ENCODE measurements at regions of chr20 and their contacts with region 1.

Region 1: GRCh38 chr20:59954718-59955117 is 3.5 kb upstream of the CDH26 start:
- DNase-seq: no peak
- H3K4me3 ChIP-seq: no peak overlapping the region
- H3K27ac ChIP-seq: no peak overlapping the region
- H3K4me1 ChIP-seq: peaks cover 3% of the 10 kb centered on the region
- H3K27me3 ChIP-seq: no peaks in the 10 kb centered on the region
- CTCF ChIP-seq: no peak

Region 2: GRCh38 chr20:59864726-59865125 is 90.0 kb before region 1 on chr20:
- intact Hi-C with region 1: no loop called
- DNase-seq: no peak
- H3K4me3 ChIP-seq: no peak overlapping the region
- H3K27ac ChIP-seq: no peak overlapping the region
- H3K4me1 ChIP-seq: no peaks in the 10 kb centered on the region
- H3K27me3 ChIP-seq: no peaks in the 10 kb centered on the region
- CTCF ChIP-seq: no peak

Region 3: GRCh38 chr20:60050158-60050947 is 95.6 kb after region 1 on chr20:
- intact Hi-C with region 1: loop called (anchors 5 kb)
- DNase-seq: no peak
- H3K4me3 ChIP-seq: no peak overlapping the region
- H3K27ac ChIP-seq: no peak overlapping the region
- H3K4me1 ChIP-seq: no peaks in the 10 kb centered on the region
- H3K27me3 ChIP-seq: no peaks in the 10 kb centered on the region
- CTCF ChIP-seq: peak; percentile 29

Measured in colonic mucosa (tissue), 4 donors.